Cardiac septum (tissue), 1 donor: ENCODE measurements at regions of chr2 and their contacts with region 1.

Region 1: GRCh38 chr2:144516981-144517865 is 2.7 kb downstream of the ZEB2 start:
- DNase-seq: peak; percentile 84

Region 2: GRCh38 chr2:144834998-144835633 is 317.9 kb after region 1 on chr2:
- intact Hi-C with region 1: loop called (anchors 5 kb)
- DNase-seq: no peak

Region 3: GRCh38 chr2:144996225-144996795 is 479.1 kb after region 1 on chr2:
- intact Hi-C with region 1: loop called (anchors 5 kb)
- DNase-seq: no peak

Region 4: DNA sequence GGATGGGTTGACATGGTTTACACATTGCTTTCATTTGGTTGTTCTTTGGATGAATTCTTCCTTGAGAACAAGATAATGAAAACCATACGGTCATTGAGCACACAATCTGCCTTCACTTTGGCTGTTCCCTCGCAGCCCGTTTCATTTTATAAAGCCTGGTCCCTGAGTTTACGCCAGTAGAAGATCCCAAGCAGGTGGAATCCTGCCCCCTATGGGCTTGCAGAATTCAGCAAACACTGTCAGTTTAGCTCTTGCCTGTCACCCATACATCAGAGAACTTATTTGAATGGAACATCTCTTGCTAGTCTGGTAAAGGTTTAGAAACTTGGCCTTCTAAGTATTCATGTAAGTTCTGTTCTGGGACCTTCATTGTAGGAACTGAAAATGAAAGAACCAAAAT is 669.1 kb after region 1 on chr2:
- intact Hi-C with region 1: loop called (anchors 10 kb)
- DNase-seq: no peak